Adrenal gland (tissue), 19 donors: ENCODE measurements at regions of chr21 and their contacts with region 1.

Region 1: DNA sequence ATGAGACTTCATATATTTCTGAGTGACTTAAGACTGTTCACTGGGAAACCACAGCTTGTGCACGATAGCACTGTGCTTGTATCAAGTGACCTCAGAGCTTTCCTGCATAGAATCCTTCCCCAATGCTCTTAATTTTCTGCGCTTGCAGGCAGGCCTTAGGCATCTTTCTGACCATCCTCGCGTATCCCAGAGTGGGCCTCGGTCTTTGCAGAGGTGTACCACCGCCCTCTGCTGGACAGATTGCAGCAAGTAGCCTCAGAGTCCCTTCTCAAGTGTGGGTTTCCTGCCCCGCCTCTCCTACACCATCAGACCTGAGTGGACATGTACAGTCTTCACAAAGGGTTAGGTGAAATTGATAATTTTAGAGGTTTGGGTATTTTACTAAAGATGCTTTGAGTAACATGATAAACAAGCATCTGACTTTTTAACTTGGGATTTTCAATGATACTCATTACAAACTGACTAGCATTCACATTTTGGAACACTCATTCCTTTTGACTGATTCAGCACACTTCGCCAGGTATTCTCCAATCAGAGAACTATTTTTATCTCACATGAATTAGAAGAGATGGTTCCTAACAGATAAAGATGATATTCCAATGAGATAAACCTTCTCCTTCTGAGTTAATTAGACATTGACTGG is 246.5 kb upstream of the USP25 start:
- DNase-seq: peak; percentile 86 to 96 (median 93)
- H3K4me3 ChIP-seq: no peak overlapping the region
- H3K27ac ChIP-seq: no peak overlapping the region
- H3K4me1 ChIP-seq: no peaks in the 10 kb centered on the region
- H3K27me3 ChIP-seq: no peaks in the 10 kb centered on the region
- CTCF ChIP-seq: peak; percentile 89 to 95 (median 93)
- POLR2A ChIP-seq: no peak

Region 2: DNA sequence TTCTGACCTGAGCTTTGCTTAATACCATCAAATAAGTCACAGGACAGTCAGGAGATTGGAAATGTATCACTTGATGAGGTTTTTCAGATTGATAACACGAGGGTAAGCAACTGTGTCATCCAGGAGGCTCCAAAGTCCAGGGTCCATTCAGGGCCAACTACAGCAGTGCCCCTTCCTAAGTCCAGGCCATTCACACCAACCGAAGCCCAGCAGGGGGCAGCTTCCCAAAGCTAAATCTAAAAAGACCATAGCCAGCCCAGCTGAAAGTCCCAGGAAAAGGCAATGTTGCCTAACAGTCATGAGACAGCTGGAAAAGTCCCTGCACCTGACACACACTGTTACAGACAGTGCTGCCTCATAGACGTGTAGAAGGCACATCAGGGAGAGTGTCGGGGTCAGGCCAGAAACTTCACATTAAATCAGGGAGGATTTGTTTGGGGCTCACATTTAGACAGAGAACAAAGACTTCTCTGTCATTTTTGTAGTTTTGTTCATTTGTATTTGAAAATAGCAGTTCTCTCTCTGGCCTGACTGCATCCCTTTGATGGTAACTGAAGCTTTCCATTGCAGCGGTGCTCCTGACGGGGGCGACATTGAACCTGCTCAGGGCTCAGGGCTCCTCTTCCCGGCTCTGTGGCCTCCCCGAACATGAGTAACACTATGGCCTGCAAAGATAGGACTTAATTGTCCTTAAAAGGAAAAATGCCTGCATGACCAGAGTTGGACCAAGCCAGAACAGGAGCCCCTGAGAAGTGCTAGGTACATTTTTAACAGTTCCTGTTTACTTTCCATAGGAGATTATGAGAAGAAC is 618.8 kb before region 1 on chr21:
- intact Hi-C with region 1: loop called (anchors 5 to 10 kb)
- DNase-seq: peak; percentile 74 to 92 (median 88)
- H3K4me3 ChIP-seq: no peak overlapping the region
- H3K27ac ChIP-seq: peak overlapping the region in 2 of 5 donors; percentile 48 to 73
- H3K4me1 ChIP-seq: peaks cover 6 to 28% of the 10 kb centered on the region in 2 donors
- H3K27me3 ChIP-seq: no peaks in the 10 kb centered on the region
- CTCF ChIP-seq: peak; percentile 50 to 81 (median 72)
- POLR2A ChIP-seq: no peak